ENCODE measurements at regions of chr5 and their contacts with region 1.

Region 1: DNA sequence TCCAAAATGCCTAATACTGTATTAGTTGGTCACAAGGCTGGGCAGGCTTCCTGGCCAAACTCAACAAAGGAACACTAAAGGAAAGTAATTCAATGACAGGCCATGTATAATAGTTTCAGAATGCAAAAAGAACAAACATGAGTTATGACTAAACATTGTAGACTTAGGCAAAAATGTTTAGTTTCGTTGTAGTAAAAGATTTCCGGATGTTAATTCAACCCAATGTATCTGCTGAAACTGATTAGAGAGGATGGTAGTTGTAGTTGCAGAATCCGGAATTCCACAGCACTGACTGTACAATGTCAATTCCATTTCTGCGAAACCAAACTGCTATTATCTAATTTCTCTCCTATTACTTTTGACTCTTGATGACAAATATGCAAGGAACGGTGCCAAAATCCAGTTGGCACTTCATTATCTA is 117.9 kb upstream of the FST start:
- DNase-seq: peak; percentile 97
- ATAC-seq: peak; percentile 70
- H3K4me3 ChIP-seq: no peak overlapping the region
- H3K27ac ChIP-seq: peak overlapping the region; percentile 93
- H3K4me1 ChIP-seq: peaks cover 16% of the 10 kb centered on the region
- H3K27me3 ChIP-seq: no peaks in the 10 kb centered on the region
- CTCF ChIP-seq: no peak
- POLR2A ChIP-seq: no peak
- RAD21 ChIP-seq: no peak

Region 2: GRCh38 chr5:53262348-53262970 is 100.1 kb before region 1 on chr5:
- CTCF ChIA-PET with region 1: no interaction called
- POLR2A ChIA-PET with region 1: interaction called, 6 read pairs
- dilution Hi-C with region 1: no loop called
- in situ Hi-C with region 1: no loop called
- intact Hi-C with region 1: loop called (anchors 2 kb)
- DNase-seq: peak; percentile 72
- ATAC-seq: peak; percentile 80
- H3K4me3 ChIP-seq: no peak overlapping the region
- H3K27ac ChIP-seq: no peak overlapping the region
- H3K4me1 ChIP-seq: peaks cover 2% of the 10 kb centered on the region; the same call in 1 of the 2 replicates
- H3K27me3 ChIP-seq: no peaks in the 10 kb centered on the region
- CTCF ChIP-seq: peak; percentile 90
- POLR2A ChIP-seq: peak; percentile 50; the same call in 1 of the 2 replicates
- RAD21 ChIP-seq: peak; percentile 96

Region 3: GRCh38 chr5:53406630-53407316 is 44.2 kb after region 1 on chr5:
- CTCF ChIA-PET with region 1: no interaction called
- POLR2A ChIA-PET with region 1: no interaction called
- dilution Hi-C with region 1: no loop called
- in situ Hi-C with region 1: no loop called
- intact Hi-C with region 1: loop called (anchors 2 kb)
- DNase-seq: peak; percentile 97
- ATAC-seq: peak; percentile 45
- H3K4me3 ChIP-seq: no peak overlapping the region
- H3K27ac ChIP-seq: peak overlapping the region; percentile 98
- H3K4me1 ChIP-seq: peaks cover 20% of the 10 kb centered on the region
- H3K27me3 ChIP-seq: no peaks in the 10 kb centered on the region
- CTCF ChIP-seq: no peak
- POLR2A ChIP-seq: no peak
- RAD21 ChIP-seq: no peak

Region 4: GRCh38 chr5:53418844-53419646 is 56.5 kb after region 1 on chr5:
- CTCF ChIA-PET with region 1: interaction called, 3 read pairs
- POLR2A ChIA-PET with region 1: interaction called, 3 read pairs
- dilution Hi-C with region 1: no loop called
- in situ Hi-C with region 1: no loop called
- intact Hi-C with region 1: loop called (anchors 2 kb)
- DNase-seq: peak; percentile 99
- ATAC-seq: peak; percentile 70
- H3K4me3 ChIP-seq: no peak overlapping the region
- H3K27ac ChIP-seq: peak overlapping the region; percentile 97
- H3K4me1 ChIP-seq: peaks cover 27% of the 10 kb centered on the region
- H3K27me3 ChIP-seq: no peaks in the 10 kb centered on the region
- CTCF ChIP-seq: no peak
- POLR2A ChIP-seq: peak; percentile 62; the same call in 1 of the 2 replicates
- RAD21 ChIP-seq: peak; percentile 19; the same call in 1 of the 2 replicates

Region 5: GRCh38 chr5:53834500-53834899 is 472.0 kb after region 1 on chr5:
- CTCF ChIA-PET with region 1: no interaction called
- POLR2A ChIA-PET with region 1: no interaction called
- dilution Hi-C with region 1: no loop called
- in situ Hi-C with region 1: no loop called
- intact Hi-C with region 1: no loop called
- DNase-seq: no peak
- ATAC-seq: no peak
- H3K4me3 ChIP-seq: no peak overlapping the region
- H3K27ac ChIP-seq: no peak overlapping the region
- H3K4me1 ChIP-seq: no peaks in the 10 kb centered on the region
- H3K27me3 ChIP-seq: no peaks in the 10 kb centered on the region
- CTCF ChIP-seq: no peak
- POLR2A ChIP-seq: no peak
- RAD21 ChIP-seq: no peak

Measured in IMR-90 (cell line).